ENCODE measurements at regions of chr7 and their contacts with region 1.

Region 1: GRCh38 chr7:19747740-19748339 is 25.6 kb downstream of the TMEM196 start:
- DNase-seq: peak; percentile 34
- H3K4me3 ChIP-seq: no peak overlapping the region
- H3K27ac ChIP-seq: no peak overlapping the region
- H3K4me1 ChIP-seq: no peaks in the 10 kb centered on the region
- CTCF ChIP-seq: peak; percentile 81

Region 2: DNA sequence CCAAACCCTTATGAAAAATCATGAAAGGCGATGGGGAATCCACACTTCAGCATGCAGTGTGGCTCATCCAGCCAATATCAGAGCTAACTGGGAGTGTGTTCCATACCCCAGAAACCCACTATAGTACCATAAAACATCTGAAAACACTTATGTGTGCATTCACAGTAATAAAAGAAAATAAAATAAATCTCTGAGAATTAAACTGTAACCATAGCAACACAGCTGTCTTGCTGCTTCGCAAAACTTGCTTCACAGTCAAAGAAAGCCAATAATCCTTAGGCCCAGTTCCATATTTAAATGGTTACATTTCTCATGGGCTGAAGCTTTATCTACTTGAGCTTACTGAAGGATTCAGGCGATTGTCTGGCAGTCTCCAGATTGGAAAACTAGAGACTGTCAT is 19.1 kb before region 1 on chr7:
- CTCF ChIA-PET with region 1: no interaction called
- POLR2A ChIA-PET with region 1: no interaction called
- intact Hi-C with region 1: no loop called
- DNase-seq: no peak
- H3K4me3 ChIP-seq: no peak overlapping the region
- H3K27ac ChIP-seq: no peak overlapping the region
- H3K4me1 ChIP-seq: no peaks in the 10 kb centered on the region
- CTCF ChIP-seq: no peak

Region 3: DNA sequence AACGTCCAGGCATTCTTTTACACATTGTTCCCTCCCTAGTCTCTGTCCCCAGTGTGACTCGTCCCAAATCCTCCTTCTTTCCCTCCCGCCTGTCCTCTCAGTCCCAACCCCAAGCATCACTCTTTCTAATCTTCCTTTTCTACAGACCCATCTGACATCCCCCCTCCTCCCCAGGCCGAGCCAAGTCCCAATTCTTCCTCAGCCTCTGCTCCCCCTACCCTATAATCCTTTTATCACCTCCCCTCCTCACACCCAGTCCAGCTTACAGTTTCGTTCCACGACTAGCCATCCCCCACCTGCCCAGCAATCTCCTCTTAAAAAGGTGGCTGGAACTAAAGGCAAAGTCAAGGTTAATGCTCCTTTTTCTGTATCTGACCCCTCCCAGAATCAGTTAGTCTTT is 374.2 kb after region 1 on chr7:
- CTCF ChIA-PET with region 1: no interaction called
- POLR2A ChIA-PET with region 1: no interaction called
- intact Hi-C with region 1: no loop called
- DNase-seq: no peak
- H3K4me3 ChIP-seq: no peak overlapping the region
- H3K27ac ChIP-seq: no peak overlapping the region
- H3K4me1 ChIP-seq: no peaks in the 10 kb centered on the region
- CTCF ChIP-seq: no peak

Region 4: GRCh38 chr7:20440472-20441105 is 692.7 kb after region 1 on chr7:
- CTCF ChIA-PET with region 1: no interaction called
- POLR2A ChIA-PET with region 1: no interaction called
- intact Hi-C with region 1: loop called (anchors 10 kb)
- DNase-seq: peak; percentile 27
- H3K4me3 ChIP-seq: no peak overlapping the region
- H3K27ac ChIP-seq: no peak overlapping the region
- H3K4me1 ChIP-seq: peaks cover 11% of the 10 kb centered on the region
- CTCF ChIP-seq: peak; percentile 83